ENCODE measurements at regions of chr1 and their contacts with region 1.

Region 1: GRCh38 chr1:44213222-44214112 is at the start of gene DMAP1:
- DNase-seq: peak; percentile 37
- H3K4me3 ChIP-seq: peak within 1 kb of the TSS; percentile 98
- CTCF ChIP-seq: no peak

Region 2: GRCh38 chr1:44049839-44050238 is 163.6 kb before region 1 on chr1:
- CTCF ChIA-PET with region 1: interaction called, 12 read pairs
- POLR2A ChIA-PET with region 1: no interaction called
- DNase-seq: peak; percentile 91
- H3K4me3 ChIP-seq: no peak overlapping the region
- CTCF ChIP-seq: no peak

Region 3: GRCh38 chr1:44237721-44238457 is 24.4 kb after region 1 on chr1:
- CTCF ChIA-PET with region 1: interaction called, 167 read pairs
- POLR2A ChIA-PET with region 1: no interaction called
- DNase-seq: no peak
- H3K4me3 ChIP-seq: no peak overlapping the region
- CTCF ChIP-seq: peak; percentile 91

Region 4: GRCh38 chr1:44284184-44284583 is 70.7 kb after region 1 on chr1:
- CTCF ChIA-PET with region 1: interaction called, 10 read pairs
- POLR2A ChIA-PET with region 1: no interaction called
- DNase-seq: no peak
- H3K4me3 ChIP-seq: no peak overlapping the region
- CTCF ChIP-seq: no peak

Region 5: GRCh38 chr1:44318097-44319088 is 104.9 kb after region 1 on chr1:
- CTCF ChIA-PET with region 1: interaction called, 54 read pairs
- POLR2A ChIA-PET with region 1: no interaction called
- DNase-seq: no peak
- H3K4me3 ChIP-seq: no peak overlapping the region
- CTCF ChIP-seq: peak; percentile 45

Region 6: DNA sequence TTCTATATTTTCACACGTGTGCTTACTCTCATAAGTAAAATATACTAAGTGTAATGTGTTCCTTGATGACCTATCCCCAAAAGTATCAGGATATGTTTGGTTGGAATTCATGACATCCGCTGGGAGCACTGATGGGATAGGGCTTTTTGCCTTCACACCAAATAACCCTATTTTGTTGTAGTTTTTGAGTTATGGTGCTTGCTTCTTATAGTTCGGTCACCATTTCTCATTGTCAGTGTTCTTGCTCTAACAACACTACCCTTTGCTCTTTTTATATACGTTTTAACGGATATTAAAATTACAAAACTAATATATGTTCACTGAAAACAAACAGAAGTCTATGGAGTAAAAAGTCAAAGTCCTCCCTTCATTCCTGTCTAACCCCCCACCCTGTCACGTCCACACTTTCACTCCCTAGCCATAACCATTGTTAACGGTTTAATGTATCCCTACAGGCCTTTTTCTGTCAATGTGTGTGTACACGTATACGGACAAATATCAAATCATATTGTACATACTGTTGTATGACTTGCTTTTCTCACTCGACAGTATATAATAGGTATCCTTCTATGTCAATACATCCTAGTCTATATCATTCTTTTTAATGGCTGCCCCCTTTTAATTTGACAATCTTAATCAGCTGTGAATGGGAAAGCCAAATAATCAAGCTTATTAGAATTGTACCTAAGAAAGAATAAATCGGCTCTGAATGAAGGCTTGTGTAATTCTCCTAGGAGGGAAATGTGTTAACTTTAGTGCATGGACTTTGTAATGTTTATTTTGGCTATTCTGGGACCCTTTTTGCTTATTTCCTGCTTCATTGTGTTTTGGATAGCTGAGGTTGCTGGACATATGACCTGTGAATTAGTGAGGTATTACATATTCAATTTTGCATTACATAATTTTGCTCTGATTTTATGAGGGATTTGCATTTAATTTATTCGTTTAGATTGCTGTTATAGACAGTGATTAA is 188.1 kb after region 1 on chr1:
- CTCF ChIA-PET with region 1: no interaction called
- POLR2A ChIA-PET with region 1: no interaction called
- DNase-seq: no peak
- H3K4me3 ChIP-seq: no peak overlapping the region
- CTCF ChIP-seq: no peak

Region 7: GRCh38 chr1:44652445-44653106 is 439.1 kb after region 1 on chr1:
- CTCF ChIA-PET with region 1: interaction called, 52 read pairs
- POLR2A ChIA-PET with region 1: no interaction called
- DNase-seq: no peak
- H3K4me3 ChIP-seq: no peak overlapping the region
- CTCF ChIP-seq: peak; percentile 98